ENCODE measurements at regions of chr4 and their contacts with region 1.

Region 1: DNA sequence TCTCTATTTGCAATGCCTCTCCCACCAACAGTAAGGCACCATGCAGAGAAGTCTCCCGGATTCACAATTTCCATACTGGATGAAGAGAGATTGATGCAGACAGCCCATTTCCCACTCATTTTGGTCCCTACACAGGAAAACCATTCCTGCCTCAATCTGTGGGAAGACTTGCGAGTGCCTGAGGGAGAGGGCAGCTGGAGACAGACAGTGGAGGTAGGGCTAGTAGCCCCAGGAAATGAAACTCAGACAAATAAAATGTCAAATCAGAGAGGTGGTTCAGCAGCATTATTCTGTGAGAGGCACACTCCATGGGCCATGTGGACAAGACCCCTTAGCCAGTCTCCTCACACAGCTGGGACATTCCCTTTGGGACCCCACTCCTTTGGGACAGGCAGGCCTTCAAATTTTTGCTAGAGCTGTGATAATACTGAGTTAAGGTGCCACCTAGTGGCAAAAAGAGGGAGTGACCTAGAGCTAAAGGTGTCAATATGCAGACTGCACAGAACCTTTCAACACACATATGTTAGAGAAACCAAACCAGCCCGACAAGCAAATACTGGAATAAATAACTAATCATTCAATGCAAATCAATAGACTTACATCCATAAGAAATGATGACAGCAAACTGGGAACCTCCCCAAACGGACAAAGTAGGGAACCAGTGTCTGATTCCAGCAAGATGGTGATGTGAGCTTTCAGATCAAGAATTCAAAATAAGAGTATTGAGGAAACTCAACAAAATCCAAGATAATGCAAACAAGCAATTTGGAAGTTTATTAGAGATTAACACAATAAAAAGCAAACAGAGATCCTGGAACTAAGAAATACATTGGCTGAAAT is 1865.3 kb upstream of the AGA start:
- DNase-seq: peak; percentile 55
- H3K4me3 Mint-ChIP-seq: no peak overlapping the region
- H3K27ac Mint-ChIP-seq: no peak overlapping the region
- H3K4me1 Mint-ChIP-seq: no peaks in the 10 kb centered on the region
- H3K27me3 Mint-ChIP-seq: no peaks in the 10 kb centered on the region
- CTCF ChIP-seq: peak; percentile 43

Region 2: GRCh38 chr4:177555007-177555574 is 1752.4 kb before region 1 on chr4:
- CTCF ChIA-PET with region 1: no interaction called
- intact Hi-C with region 1: loop called (anchors 5 kb)
- DNase-seq: peak; percentile 35
- H3K4me3 Mint-ChIP-seq: no peak overlapping the region
- H3K27ac Mint-ChIP-seq: no peak overlapping the region
- H3K4me1 Mint-ChIP-seq: no peaks in the 10 kb centered on the region
- H3K27me3 Mint-ChIP-seq: no peaks in the 10 kb centered on the region
- CTCF ChIP-seq: peak; percentile 34

Region 3: DNA sequence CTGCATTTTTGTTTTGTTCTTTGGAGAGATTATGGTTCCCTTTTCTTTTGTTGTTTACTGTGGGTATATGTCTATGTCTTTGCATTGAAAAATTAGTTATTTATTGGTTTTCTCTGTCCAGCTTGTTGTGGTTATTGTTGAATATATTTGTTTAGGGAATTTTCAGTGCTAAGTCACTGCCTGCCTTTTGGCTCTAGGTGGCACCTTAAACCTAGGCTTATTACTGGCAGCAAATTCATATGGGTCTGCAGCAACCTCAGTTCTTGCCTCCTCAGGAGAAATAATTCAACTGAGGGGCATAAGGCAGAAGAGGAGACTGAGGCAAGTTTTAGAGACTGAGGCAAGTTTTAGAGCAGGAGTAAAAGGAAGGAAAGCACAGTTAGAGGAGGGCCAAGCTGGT is 708.0 kb before region 1 on chr4:
- CTCF ChIA-PET with region 1: interaction called, 3 read pairs
- intact Hi-C with region 1: loop called (anchors 2 kb)
- DNase-seq: peak; percentile 1
- H3K4me3 Mint-ChIP-seq: no peak overlapping the region
- H3K27ac Mint-ChIP-seq: no peak overlapping the region
- H3K4me1 Mint-ChIP-seq: no peaks in the 10 kb centered on the region
- H3K27me3 Mint-ChIP-seq: no peaks in the 10 kb centered on the region
- CTCF ChIP-seq: no peak

Region 4: GRCh38 chr4:179196511-179196910 is 111.0 kb before region 1 on chr4:
- CTCF ChIA-PET with region 1: no interaction called
- intact Hi-C with region 1: no loop called
- DNase-seq: no peak
- H3K4me3 Mint-ChIP-seq: no peak overlapping the region
- H3K27ac Mint-ChIP-seq: no peak overlapping the region
- H3K4me1 Mint-ChIP-seq: peaks cover 8% of the 10 kb centered on the region
- H3K27me3 Mint-ChIP-seq: no peaks in the 10 kb centered on the region
- CTCF ChIP-seq: no peak

Region 5: GRCh38 chr4:179880756-179881155 is 573.2 kb after region 1 on chr4:
- CTCF ChIA-PET with region 1: no interaction called
- intact Hi-C with region 1: no loop called
- DNase-seq: no peak
- H3K4me3 Mint-ChIP-seq: no peak overlapping the region
- H3K27ac Mint-ChIP-seq: no peak overlapping the region
- H3K4me1 Mint-ChIP-seq: no peaks in the 10 kb centered on the region
- H3K27me3 Mint-ChIP-seq: no peaks in the 10 kb centered on the region
- CTCF ChIP-seq: no peak